PC-3 (cell line): ENCODE measurements at regions of chr5 and their contacts with region 1.

Region 1: DNA sequence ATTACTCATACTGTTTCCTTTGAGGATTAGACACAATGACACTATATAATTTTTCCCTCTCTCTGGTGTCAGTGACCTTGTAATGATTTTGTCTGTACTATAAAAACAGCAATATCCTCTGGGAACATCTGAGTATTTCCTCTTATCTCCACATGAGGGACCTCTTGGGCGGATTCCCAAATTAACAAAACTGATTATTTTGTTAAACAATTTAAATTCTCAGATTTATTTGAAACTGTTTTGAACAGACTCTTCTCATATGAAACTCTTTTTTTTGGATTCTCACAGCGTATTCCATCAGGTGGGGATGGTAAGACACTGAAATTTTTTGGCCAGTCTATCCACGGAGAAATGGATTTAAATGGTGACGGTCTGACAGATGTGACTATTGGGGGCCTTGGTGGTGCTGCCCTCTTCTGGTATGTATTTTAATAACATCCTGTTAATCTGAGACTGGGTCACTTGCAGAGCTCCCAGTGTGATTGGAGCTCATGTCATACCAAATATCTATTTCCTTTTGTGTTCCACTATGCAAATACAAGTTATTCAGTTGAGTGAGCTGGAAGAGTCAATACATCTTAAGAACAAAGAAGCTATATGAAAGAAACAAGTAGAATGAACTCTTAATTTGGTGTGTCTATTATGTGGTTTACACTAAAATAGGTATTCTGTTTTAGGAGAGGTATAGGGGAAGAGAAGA is 73.8 kb upstream of the ITGA2 start:
- DNase-seq: peak; percentile 76
- ATAC-seq: peak; percentile 97
- H3K4me3 ChIP-seq: peak overlapping the region; percentile 55
- H3K27ac ChIP-seq: 0 out of 2 replicates have a peak overlapping the region, but pooled peaks have one; percentile 14
- H3K4me1 ChIP-seq: no peaks in the 10 kb centered on the region
- H3K27me3 ChIP-seq: no peaks in the 10 kb centered on the region
- CTCF ChIP-seq: peak; percentile 89

Region 2: GRCh38 chr5:52665559-52665958 is 249.8 kb before region 1 on chr5:
- CTCF ChIA-PET with region 1: interaction called, 3 read pairs
- POLR2A ChIA-PET with region 1: no interaction called
- intact Hi-C with region 1: loop called (anchors 1 kb)
- DNase-seq: no peak
- ATAC-seq: no peak
- H3K4me3 ChIP-seq: no peak overlapping the region
- H3K27ac ChIP-seq: no peak overlapping the region
- H3K4me1 ChIP-seq: no peaks in the 10 kb centered on the region
- H3K27me3 ChIP-seq: peaks cover 25% of the 10 kb centered on the region
- CTCF ChIP-seq: no peak

Region 3: GRCh38 chr5:52693280-52693679 is 222.0 kb before region 1 on chr5:
- CTCF ChIA-PET with region 1: interaction called, 4 read pairs
- POLR2A ChIA-PET with region 1: no interaction called
- intact Hi-C with region 1: loop called (anchors 2 kb)
- DNase-seq: peak; percentile 49
- ATAC-seq: peak; percentile 83
- H3K4me3 ChIP-seq: no peak overlapping the region
- H3K27ac ChIP-seq: no peak overlapping the region
- H3K4me1 ChIP-seq: peaks cover 6% of the 10 kb centered on the region; the same call in 1 of the 2 replicates
- H3K27me3 ChIP-seq: peaks cover 3% of the 10 kb centered on the region; the same call in 1 of the 2 replicates
- CTCF ChIP-seq: peak; percentile 79